T-cell (primary cell): ENCODE measurements at regions of chr20 and their contacts with region 1.

Region 1: DNA sequence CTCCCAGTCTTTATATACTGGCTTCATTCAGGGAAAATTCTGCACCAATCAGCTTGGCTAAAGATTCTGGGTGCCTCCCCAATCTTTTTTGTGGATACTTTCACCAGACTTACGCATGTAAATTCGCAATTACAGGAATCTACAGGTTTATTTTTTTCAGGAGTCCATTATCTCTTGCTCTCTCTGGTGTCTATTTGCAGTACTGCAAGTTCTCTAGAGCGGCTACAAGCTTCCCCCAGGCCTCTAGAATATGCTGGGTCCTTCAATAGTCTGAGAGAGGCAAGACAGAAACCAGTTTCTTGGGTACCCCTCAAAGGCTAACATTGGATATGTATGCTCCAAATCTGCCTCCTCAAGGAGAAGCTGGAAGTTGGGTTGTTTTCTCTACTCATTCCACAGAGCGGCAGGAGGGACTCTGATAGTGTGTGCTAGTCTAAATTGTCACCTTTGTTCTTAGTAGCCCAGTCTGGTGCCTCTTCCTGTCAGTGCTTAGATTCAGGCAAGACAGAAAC is 58.5 kb downstream of the SUN5 start:
- DNase-seq: peak in 7 of 35 experiments; percentile 14 to 67 (median 23)
- ATAC-seq: peak; percentile 89 to 96 (median 94)
- H3K4me3 ChIP-seq: no peak overlapping the region
- H3K4me3 Mint-ChIP-seq: peak overlapping the region; percentile 25 to 55 (median 39)
- H3K27ac ChIP-seq: peak overlapping the region; percentile 63
- H3K27ac Mint-ChIP-seq: peak overlapping the region; percentile 87 to 93
- H3K4me1 ChIP-seq: peaks cover 8 to 15% of the 10 kb centered on the region in 2 experiments
- H3K4me1 Mint-ChIP-seq: peaks cover 42 to 52% (median 43%) of the 10 kb centered on the region in 3 donors
- H3K27me3 ChIP-seq: no peaks in the 10 kb centered on the region
- H3K27me3 Mint-ChIP-seq: no peaks in the 10 kb centered on the region

Region 2: DNA sequence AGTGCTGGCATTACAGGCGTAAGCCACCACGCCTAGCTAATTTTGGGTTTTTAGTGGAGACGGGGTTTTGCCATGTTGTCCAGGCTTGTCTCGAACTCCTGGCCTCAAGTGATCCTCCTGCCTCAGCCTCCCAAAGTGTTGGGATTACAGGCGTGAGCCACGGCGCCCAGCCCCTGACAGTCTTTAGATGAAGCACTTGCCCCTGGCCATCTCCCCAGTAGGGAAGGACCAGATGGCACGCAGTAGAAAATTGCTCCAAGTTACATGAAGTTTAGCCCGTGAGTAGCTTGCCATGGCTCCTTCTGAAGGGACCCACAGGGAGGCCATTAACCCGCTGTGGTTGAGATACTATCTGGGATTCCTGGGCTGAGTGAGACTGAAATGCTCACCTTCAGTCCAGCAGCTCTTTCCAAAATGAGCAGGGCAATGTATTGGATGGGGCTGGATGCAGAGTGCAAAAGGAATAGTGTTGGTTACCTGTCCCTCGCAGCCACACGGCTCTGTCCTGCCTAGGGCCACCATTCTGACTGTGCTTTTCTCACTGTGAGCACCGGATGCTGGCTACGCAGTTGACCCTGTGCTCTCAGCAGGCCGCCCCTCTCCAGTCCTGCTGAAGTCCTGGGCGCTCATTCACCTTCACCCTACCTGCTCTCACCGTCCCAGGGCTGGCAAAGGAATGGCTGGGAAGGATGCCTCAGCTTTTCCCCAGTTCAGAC is 20.1 kb before region 1 on chr20:
- CTCF ChIA-PET with region 1: no interaction called
- POLR2A ChIA-PET with region 1: no interaction called
- DNase-seq: no peak
- ATAC-seq: no peak
- H3K4me3 ChIP-seq: no peak overlapping the region
- H3K4me3 Mint-ChIP-seq: no peak overlapping the region
- H3K27ac ChIP-seq: no peak overlapping the region
- H3K27ac Mint-ChIP-seq: no peak overlapping the region
- H3K4me1 ChIP-seq: no peaks in the 10 kb centered on the region
- H3K4me1 Mint-ChIP-seq: no peaks in the 10 kb centered on the region
- H3K27me3 ChIP-seq: no peaks in the 10 kb centered on the region
- H3K27me3 Mint-ChIP-seq: no peaks in the 10 kb centered on the region

Region 3: DNA sequence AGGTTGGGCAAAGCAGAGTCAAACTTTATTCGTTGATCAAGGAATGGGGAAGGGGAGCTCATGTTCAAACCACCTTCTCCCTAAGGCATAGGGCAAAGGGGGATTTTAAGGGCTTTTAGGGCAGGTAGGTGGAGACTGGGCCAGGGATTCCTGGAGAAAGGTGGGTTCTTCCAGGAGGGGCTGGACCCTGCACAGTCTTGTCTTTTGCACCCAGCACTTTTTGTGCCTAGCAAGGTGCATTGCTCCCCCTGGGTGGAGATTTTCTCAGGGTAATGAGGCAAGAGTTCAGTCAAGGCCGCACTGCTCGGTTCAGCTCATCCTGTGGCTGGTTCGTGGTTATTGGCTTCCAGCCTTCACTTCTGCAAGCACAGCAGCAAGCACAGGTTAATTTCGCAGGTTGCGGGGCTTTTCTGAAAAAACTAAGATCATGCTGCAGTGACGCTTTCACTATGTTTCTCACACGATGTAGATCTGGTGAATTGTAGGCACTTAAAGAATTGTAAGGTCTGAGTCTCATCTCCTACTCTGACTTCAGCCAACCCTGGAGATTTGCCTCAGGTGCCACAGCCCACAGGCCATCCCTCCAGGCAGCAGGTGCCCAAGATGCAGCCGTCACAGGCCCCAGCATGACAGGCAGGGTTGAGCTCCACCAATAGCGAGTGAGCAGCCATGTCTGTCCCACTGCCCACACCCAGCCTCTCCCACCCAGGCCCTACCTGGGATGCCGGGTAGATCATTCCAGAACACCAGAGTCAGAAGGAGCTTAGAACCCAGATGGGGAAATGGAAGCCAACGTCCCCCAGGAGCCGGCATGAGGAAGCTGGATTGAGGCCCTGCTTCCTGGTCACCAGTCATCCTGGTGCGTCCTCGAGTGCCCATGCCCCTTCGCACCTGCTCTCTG is 21.4 kb after region 1 on chr20:
- CTCF ChIA-PET with region 1: interaction called, 3 to 11 read pairs
- POLR2A ChIA-PET with region 1: interaction called, 3 read pairs
- DNase-seq: peak in 34 of 35 experiments; percentile 42 to 89 (median 66)
- ATAC-seq: peak; percentile 38 to 66 (median 57)
- H3K4me3 ChIP-seq: peak overlapping the region; percentile 13 to 23
- H3K4me3 Mint-ChIP-seq: peak overlapping the region in 2 of 3 donors; percentile 57 to 65
- H3K27ac ChIP-seq: peak overlapping the region; percentile 98
- H3K27ac Mint-ChIP-seq: no peak overlapping the region
- H3K4me1 ChIP-seq: peaks cover 81 to 94% of the 10 kb centered on the region in 2 experiments
- H3K4me1 Mint-ChIP-seq: peaks cover 21 to 85% (median 82%) of the 10 kb centered on the region in 3 donors
- H3K27me3 ChIP-seq: no peaks in the 10 kb centered on the region
- H3K27me3 Mint-ChIP-seq: no peaks in the 10 kb centered on the region

Region 4: GRCh38 chr20:34415079-34415478 is 1469.3 kb after region 1 on chr20:
- CTCF ChIA-PET with region 1: no interaction called
- POLR2A ChIA-PET with region 1: interaction called in 1 of 2 experiments, 11 read pairs
- DNase-seq: no peak
- ATAC-seq: no peak
- H3K4me3 ChIP-seq: no peak overlapping the region
- H3K4me3 Mint-ChIP-seq: no peak overlapping the region
- H3K27ac ChIP-seq: no peak overlapping the region
- H3K27ac Mint-ChIP-seq: no peak overlapping the region
- H3K4me1 ChIP-seq: no peaks in the 10 kb centered on the region
- H3K4me1 Mint-ChIP-seq: peaks cover 9 to 12% (median 9%) of the 10 kb centered on the region in 3 donors
- H3K27me3 ChIP-seq: no peaks in the 10 kb centered on the region
- H3K27me3 Mint-ChIP-seq: no peaks in the 10 kb centered on the region